ENCODE measurements at regions of chr6 and their contacts with region 1.

Region 1: DNA sequence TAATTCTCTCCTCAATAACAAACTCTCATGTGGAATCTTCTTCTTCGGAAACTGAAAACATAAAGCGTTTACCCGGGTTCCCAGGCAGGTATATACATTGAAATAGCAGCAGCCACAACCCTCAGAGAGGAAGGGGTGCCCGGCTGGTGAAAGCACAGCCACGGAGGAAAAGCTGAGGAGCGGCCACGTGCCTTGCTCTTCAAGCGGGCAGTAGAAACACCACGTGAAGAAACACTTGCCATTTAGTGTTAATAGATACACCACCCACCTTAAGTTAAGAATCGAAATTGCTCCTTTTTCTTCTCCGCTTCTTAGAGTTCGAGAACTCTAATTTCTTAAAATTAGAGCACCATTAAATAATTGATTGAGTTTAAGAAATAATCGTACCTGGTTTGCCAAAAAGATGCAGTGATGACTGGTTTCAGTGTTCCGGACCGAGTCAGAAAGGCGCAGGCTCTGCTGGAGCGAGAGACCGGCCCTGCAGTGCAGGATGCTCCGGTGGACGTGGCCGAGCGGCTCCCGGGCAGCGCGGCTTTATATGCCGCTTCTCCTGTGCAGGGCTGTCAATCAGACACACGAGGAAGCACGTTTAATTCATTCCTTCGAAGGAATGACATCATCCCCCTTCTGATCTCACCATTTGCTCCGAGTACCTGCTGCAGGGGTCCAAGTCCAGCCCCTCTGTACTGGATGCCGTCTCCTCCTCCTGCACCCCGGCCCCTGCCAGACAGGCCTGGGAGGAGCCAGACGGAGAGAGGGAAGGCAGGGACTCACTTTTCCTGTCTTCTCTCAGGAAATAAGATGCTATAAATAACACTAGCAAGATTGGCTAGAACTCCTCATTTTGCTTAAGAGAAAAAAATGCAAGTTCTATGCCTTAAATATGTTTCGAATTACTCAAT is at the start of gene THBS2:
- DNase-seq: peak in 1 of 2 donors; percentile 86
- H3K4me3 ChIP-seq: peak within 1 kb of the TSS; percentile 32 to 82
- H3K27ac ChIP-seq: peak within 1 kb of the TSS; percentile 63 to 71
- H3K4me1 ChIP-seq: peaks cover 0 to 14% of the 10 kb centered on the region in 2 donors
- H3K27me3 ChIP-seq: no peaks in the 10 kb centered on the region
- CTCF ChIP-seq: no peak
- total RNA-seq, gene THBS2: 709 TPM

Region 2: GRCh38 chr6:168895102-168895812 is 358.3 kb before region 1 on chr6:
- intact Hi-C with region 1: loop called (anchors 10 kb)
- DNase-seq: peak in 1 of 2 donors; percentile 85
- H3K4me3 ChIP-seq: peak overlapping the region in 1 of 2 donors; percentile 35
- H3K27ac ChIP-seq: no peak overlapping the region
- H3K4me1 ChIP-seq: no peaks in the 10 kb centered on the region
- H3K27me3 ChIP-seq: no peaks in the 10 kb centered on the region
- CTCF ChIP-seq: peak; percentile 82 to 95 (median 91)

Region 3: DNA sequence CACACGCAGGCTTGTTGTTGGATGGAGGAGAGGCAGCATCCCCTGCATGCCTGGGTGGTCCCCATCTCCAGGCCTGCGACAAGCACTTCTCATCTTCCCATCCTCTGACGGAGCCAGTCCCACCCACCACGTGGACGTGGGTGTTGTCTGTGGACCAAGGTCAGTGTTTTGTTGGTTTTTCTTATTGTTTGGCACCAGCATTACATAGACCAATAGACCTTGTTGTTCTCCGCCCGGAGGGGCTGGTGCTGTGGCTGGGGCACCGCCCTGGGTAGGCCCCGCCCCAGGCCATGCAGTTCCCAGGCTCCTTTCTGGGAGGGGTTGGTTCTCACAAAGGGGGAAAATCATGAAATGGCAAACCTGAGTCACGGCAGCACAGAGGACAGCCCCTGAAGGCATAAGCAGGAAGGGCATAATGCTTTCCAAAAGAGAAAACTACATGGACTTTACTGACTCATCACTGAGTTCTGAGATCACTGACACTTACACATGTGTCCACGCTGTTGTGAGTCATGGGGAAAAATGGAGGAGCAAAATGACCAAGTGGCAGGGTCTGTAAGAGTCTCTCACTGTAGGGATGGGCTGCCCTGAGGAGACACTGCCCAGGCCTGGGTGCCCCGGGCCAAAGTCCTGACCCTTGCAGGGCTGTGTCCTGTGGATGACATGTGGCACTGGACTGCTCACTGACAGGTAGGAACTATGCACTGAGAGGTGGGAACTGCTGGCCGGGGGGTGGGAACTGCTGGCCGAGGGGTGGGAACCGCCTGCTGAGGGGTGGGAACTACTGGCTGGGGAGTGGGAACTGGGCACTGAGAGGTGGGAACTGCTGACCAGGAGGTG is 90.6 kb before region 1 on chr6:
- intact Hi-C with region 1: loop called (anchors 5 kb)
- DNase-seq: peak; percentile 65 to 94
- H3K4me3 ChIP-seq: peak overlapping the region; percentile 1 to 4
- H3K27ac ChIP-seq: peak overlapping the region; percentile 84 to 87
- H3K4me1 ChIP-seq: peaks cover 15 to 46% of the 10 kb centered on the region in 2 donors
- H3K27me3 ChIP-seq: no peaks in the 10 kb centered on the region
- CTCF ChIP-seq: no peak

Region 4: GRCh38 chr6:169316651-169317050 is 63.1 kb after region 1 on chr6:
- intact Hi-C with region 1: loop called (anchors 5 kb)
- DNase-seq: no peak
- H3K4me3 ChIP-seq: no peak overlapping the region
- H3K27ac ChIP-seq: no peak overlapping the region
- H3K4me1 ChIP-seq: peaks cover 0 to 12% of the 10 kb centered on the region in 2 donors
- H3K27me3 ChIP-seq: no peaks in the 10 kb centered on the region
- CTCF ChIP-seq: no peak

Region 5: GRCh38 chr6:169452117-169452868 is 198.7 kb after region 1 on chr6:
- intact Hi-C with region 1: loop called (anchors 2 kb)
- DNase-seq: peak; percentile 54 to 91
- H3K4me3 ChIP-seq: peak overlapping the region; percentile 47 to 49
- H3K27ac ChIP-seq: peak overlapping the region; percentile 74 to 93
- H3K4me1 ChIP-seq: peaks cover 0 to 13% of the 10 kb centered on the region in 2 donors
- H3K27me3 ChIP-seq: no peaks in the 10 kb centered on the region
- CTCF ChIP-seq: no peak